Transverse colon (tissue), 4 donors: ENCODE measurements at regions of chr20 and their contacts with region 1.

Region 1: GRCh38 chr20:56409521-56409920 is 2.5 kb upstream of the CASS4 start:
- DNase-seq: no peak
- H3K4me3 ChIP-seq: no peak overlapping the region
- H3K27ac ChIP-seq: peak overlapping the region in 2 of 4 donors; percentile 33 to 41
- H3K4me1 ChIP-seq: peaks cover 0 to 12% (median 0%) of the 10 kb centered on the region in 4 donors
- H3K27me3 ChIP-seq: no peaks in the 10 kb centered on the region
- CTCF ChIP-seq: no peak
- EP300 ChIP-seq: no peak
- POLR2A ChIP-seq: no peak

Region 2: GRCh38 chr20:56574531-56575142 is 165.1 kb after region 1 on chr20:
- in situ Hi-C with region 1: no loop called
- intact Hi-C with region 1: loop called (anchors 5 kb)
- DNase-seq: no peak
- H3K4me3 ChIP-seq: no peak overlapping the region
- H3K27ac ChIP-seq: no peak overlapping the region
- H3K4me1 ChIP-seq: no peaks in the 10 kb centered on the region
- H3K27me3 ChIP-seq: no peaks in the 10 kb centered on the region
- CTCF ChIP-seq: no peak
- EP300 ChIP-seq: no peak
- POLR2A ChIP-seq: no peak

Region 3: GRCh38 chr20:56616716-56617115 is 207.2 kb after region 1 on chr20:
- in situ Hi-C with region 1: no loop called
- intact Hi-C with region 1: no loop called
- DNase-seq: no peak
- H3K4me3 ChIP-seq: no peak overlapping the region
- H3K27ac ChIP-seq: no peak overlapping the region
- H3K4me1 ChIP-seq: no peaks in the 10 kb centered on the region
- H3K27me3 ChIP-seq: no peaks in the 10 kb centered on the region
- CTCF ChIP-seq: no peak
- EP300 ChIP-seq: no peak
- POLR2A ChIP-seq: no peak